Left cardiac atrium (tissue), 4 donors: ENCODE measurements at regions of chr7 and their contacts with region 1.

Region 1: DNA sequence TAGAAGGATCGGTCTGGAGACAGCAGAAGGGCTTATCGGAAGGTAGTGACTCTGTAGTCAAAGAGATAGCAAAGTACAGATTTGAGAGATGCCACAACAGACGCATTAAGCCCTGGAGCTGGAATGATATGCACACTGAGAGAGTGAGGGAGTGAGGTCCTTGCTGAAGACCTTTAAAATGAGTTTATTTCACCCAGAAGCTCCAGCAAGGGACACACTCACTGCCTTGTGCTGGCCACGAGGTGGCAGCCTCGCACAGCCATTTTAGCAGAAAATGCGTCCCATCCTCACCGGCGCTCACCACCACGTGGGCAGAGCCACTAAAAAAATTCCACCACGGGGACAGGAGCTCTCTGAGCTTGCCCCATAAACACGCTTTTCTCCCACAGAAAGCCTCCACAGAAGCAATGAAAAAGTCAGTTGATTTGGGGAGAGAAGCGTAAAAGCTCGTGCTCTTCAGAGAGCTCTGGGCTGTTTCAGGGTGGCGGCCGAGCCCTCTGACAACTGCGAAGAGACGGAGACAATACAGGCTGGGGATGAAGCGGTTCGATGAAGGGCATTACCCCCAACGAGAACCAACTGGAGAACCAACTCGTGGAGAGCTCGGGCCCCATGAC is 163.0 kb upstream of the KLF14 start:
- DNase-seq: peak; percentile 83
- ATAC-seq: peak; percentile 45 to 68

Region 2: GRCh38 chr7:130941322-130942210 is 44.6 kb after region 1 on chr7:
- intact Hi-C with region 1: loop called in 1 of 2 experiments (anchors 5 kb)
- DNase-seq: peak; percentile 53
- ATAC-seq: peak; percentile 46 to 75

Region 3: GRCh38 chr7:131007394-131008330 is 110.7 kb after region 1 on chr7:
- intact Hi-C with region 1: loop called in 1 of 2 experiments (anchors 5 kb)
- DNase-seq: peak; percentile 66
- ATAC-seq: peak; percentile 67 to 75

Region 4: DNA sequence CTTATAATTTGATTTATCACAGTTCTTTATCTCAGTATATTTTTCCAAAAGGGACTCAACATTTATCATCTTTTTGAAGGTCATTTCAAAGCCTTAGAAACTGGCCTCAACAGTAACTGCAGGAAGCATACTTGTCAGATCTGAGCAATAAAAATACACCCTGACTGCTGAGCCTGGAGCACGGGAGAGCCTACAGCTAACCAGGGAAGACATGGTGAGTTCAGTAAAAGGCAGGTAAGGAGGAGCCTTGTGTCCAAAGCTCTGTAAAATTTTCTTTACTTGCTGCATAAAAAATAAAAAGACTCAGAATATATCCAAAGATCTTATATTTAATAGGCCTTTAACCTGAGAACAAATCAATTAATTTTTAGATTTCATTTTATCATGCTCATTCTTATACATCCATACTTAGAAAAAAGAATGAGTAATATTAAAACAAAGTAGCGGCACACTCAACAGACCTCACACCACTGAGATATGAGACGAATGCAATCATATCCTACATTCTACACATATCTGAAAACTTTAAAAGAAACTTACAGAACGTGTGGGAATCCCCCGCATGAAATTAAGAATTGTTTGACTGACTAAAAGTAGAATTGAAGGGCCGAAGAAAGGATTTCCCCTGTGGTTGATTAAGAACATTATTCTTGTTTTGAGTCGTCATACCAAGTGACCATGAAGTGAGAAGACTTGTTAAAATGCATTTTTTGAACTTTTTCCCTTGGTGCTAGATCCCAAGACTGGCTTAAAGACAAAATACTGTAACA is 134.3 kb after region 1 on chr7:
- intact Hi-C with region 1: loop called in 1 of 2 experiments (anchors 10 kb)
- DNase-seq: no peak
- ATAC-seq: no peak

Region 5: GRCh38 chr7:131040467-131040932 is 143.5 kb after region 1 on chr7:
- intact Hi-C with region 1: loop called (anchors 2 to 10 kb)
- DNase-seq: no peak
- ATAC-seq: peak; percentile 67 to 75